Calu3 (cell line): ENCODE measurements at regions of chr15 and their contacts with region 1.

Region 1: DNA sequence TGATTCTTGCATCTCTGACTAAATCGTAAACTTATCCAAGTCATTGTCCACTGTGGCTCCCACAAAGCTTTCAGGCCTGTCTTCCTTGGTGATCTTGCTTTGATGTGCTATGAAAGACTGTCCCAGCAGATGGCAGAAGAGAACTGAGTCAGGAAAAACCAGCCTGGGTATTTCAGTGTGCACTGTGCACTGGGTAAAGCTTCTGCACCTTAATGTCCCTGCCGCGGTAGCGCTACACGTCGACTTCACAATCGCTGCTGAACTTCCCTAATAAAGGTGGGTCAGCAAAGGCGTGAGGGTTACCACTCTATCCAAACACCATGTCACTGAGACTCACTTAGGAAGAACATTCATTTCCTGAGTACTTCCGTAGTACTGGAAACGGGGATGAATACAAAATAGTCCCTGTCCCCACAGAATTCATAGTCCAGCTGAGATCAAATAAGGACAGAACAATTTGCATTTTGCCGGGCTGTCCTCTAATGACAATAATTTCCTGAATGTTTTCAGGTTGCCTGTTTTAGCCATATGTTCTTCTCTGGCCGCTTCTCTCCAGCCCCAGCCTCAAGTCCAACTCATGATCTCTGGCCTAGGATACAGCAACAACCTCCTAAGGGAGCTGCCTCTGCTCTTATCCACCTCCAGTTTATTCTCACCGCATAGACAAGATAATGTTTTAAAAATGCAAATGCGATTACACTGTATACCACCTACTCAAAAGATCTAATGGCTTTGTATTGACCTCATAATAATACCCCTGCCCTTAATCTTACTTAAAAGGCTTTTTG is 83.6 kb upstream of the AKAP13 start:
- DNase-seq: peak; percentile 80
- H3K4me3 Mint-ChIP-seq: peak overlapping the region; percentile 54
- H3K27ac Mint-ChIP-seq: no peak overlapping the region
- H3K4me1 Mint-ChIP-seq: peaks cover 20% of the 10 kb centered on the region
- H3K27me3 Mint-ChIP-seq: no peaks in the 10 kb centered on the region
- CTCF ChIP-seq: peak; percentile 68

Region 2: GRCh38 chr15:84981054-84981710 is 315.6 kb before region 1 on chr15:
- CTCF ChIA-PET with region 1: no interaction called
- intact Hi-C with region 1: no loop called
- DNase-seq: peak; percentile 99
- H3K4me3 Mint-ChIP-seq: peak overlapping the region; percentile 97
- H3K27ac Mint-ChIP-seq: peak overlapping the region; percentile 94
- H3K4me1 Mint-ChIP-seq: peaks cover 28% of the 10 kb centered on the region
- H3K27me3 Mint-ChIP-seq: no peaks in the 10 kb centered on the region
- CTCF ChIP-seq: peak; percentile 49

Region 3: GRCh38 chr15:85091990-85092389 is 204.8 kb before region 1 on chr15:
- CTCF ChIA-PET with region 1: no interaction called
- intact Hi-C with region 1: no loop called
- DNase-seq: no peak
- H3K4me3 Mint-ChIP-seq: no peak overlapping the region
- H3K27ac Mint-ChIP-seq: no peak overlapping the region
- H3K4me1 Mint-ChIP-seq: no peaks in the 10 kb centered on the region
- H3K27me3 Mint-ChIP-seq: no peaks in the 10 kb centered on the region
- CTCF ChIP-seq: no peak

Region 4: DNA sequence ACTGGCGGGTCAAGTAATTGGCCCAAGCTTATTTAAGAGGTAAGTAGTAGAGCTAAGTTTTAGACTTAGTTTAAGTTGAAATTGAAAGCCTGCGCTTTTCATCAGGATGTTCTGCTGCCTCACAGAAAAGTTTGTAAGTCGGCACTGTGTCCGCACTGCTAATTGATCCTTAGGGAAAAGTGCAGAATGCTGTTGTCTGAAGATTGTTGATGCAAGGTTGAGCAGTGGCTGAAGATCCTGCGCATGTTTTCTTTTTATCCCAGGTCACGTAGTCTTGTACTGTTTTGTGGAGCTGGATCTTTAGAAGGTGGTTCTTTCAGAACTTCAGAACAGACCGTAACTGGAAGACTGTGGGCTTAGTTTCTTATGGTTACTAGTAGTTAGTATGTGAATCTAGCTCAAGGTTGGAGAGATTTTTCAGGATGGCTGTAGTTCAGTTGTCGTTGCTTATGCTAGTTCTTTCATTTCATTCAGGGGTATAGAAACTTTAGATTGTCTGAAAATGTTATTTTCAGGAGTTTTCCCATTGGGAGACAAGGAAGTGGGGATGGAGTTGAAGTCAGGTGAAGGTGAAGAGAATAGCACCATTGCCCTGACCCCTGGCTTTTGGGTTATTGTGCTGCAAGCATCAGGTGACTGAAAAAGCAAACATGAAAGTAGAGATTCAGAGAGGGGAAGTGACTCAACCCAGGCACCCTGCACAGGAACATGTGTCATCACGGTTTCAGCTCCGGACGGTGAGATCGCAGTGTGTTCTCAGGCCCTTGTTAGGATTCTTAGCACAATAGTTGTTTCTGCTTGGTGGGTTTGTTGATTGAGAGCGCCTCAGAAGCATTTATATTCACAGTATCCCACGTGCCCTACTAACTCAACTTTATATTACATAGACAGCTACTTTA is 116.4 kb after region 1 on chr15:
- CTCF ChIA-PET with region 1: interaction called, 51 read pairs
- intact Hi-C with region 1: loop called (anchors 2 kb)
- DNase-seq: peak; percentile 79
- H3K4me3 Mint-ChIP-seq: peak overlapping the region; percentile 43
- H3K27ac Mint-ChIP-seq: peak overlapping the region; percentile 90
- H3K4me1 Mint-ChIP-seq: peaks cover 79% of the 10 kb centered on the region
- H3K27me3 Mint-ChIP-seq: no peaks in the 10 kb centered on the region
- CTCF ChIP-seq: no peak

Region 5: DNA sequence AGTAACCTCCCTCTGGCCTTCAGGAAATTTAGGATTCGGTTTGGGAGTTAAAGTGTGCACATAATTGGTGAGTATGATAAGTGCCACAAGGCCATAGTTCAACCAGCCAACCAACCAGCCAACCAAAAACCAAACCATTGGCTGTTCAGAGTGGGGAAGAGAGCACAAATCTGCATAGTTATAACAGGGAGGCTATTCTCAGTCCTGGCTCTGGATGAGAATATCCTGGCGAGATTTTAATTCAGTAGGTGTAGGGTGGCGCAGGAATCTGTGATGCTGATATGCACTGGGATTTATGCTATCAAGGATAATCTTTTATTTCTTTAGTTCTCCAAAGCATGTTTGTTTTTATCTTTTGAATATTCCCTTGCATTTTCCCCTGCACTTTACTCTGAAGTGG is 132.7 kb after region 1 on chr15:
- CTCF ChIA-PET with region 1: no interaction called
- intact Hi-C with region 1: no loop called
- DNase-seq: no peak
- H3K4me3 Mint-ChIP-seq: no peak overlapping the region
- H3K27ac Mint-ChIP-seq: no peak overlapping the region
- H3K4me1 Mint-ChIP-seq: peaks cover 33% of the 10 kb centered on the region
- H3K27me3 Mint-ChIP-seq: no peaks in the 10 kb centered on the region
- CTCF ChIP-seq: no peak

Region 6: DNA sequence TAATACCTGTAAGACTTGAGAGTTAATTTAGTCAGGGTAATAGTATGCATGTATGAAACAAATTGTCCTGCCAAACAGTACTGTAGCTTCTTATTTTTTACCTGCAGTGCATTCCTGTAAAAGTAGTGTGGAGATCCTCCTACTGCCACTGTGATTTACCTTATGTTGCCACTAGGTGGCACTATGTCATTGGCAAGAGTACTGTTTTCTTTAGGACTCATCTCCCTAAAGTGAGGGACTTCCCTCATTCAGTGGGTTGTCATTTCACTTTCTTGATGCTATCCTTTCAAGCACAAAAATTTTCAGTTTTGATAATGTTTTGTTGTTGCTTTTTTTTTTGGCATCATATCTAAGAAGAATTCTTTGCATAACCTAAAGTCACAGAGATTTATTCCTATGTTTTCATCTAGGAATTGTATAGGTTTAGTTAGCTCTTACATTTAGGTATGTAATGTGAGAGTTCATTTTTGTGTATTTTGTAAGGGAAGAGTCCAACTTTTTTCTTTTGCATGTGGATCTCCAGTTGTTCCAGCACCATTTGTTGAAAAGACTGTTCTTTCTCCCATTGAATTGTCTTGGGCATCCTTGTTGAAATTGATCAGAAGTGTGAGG is 189.3 kb after region 1 on chr15:
- CTCF ChIA-PET with region 1: interaction called, 5 read pairs
- intact Hi-C with region 1: loop called (anchors 5 kb)
- DNase-seq: peak; percentile 78
- H3K4me3 Mint-ChIP-seq: no peak overlapping the region
- H3K27ac Mint-ChIP-seq: no peak overlapping the region
- H3K4me1 Mint-ChIP-seq: peaks cover 53% of the 10 kb centered on the region
- H3K27me3 Mint-ChIP-seq: no peaks in the 10 kb centered on the region
- CTCF ChIP-seq: peak; percentile 77

Region 7: GRCh38 chr15:85618956-85619491 is 322.2 kb after region 1 on chr15:
- CTCF ChIA-PET with region 1: no interaction called
- intact Hi-C with region 1: loop called (anchors 10 kb)
- DNase-seq: peak; percentile 58
- H3K4me3 Mint-ChIP-seq: no peak overlapping the region
- H3K27ac Mint-ChIP-seq: no peak overlapping the region
- H3K4me1 Mint-ChIP-seq: peaks cover 38% of the 10 kb centered on the region
- H3K27me3 Mint-ChIP-seq: no peaks in the 10 kb centered on the region
- CTCF ChIP-seq: no peak

Region 8: DNA sequence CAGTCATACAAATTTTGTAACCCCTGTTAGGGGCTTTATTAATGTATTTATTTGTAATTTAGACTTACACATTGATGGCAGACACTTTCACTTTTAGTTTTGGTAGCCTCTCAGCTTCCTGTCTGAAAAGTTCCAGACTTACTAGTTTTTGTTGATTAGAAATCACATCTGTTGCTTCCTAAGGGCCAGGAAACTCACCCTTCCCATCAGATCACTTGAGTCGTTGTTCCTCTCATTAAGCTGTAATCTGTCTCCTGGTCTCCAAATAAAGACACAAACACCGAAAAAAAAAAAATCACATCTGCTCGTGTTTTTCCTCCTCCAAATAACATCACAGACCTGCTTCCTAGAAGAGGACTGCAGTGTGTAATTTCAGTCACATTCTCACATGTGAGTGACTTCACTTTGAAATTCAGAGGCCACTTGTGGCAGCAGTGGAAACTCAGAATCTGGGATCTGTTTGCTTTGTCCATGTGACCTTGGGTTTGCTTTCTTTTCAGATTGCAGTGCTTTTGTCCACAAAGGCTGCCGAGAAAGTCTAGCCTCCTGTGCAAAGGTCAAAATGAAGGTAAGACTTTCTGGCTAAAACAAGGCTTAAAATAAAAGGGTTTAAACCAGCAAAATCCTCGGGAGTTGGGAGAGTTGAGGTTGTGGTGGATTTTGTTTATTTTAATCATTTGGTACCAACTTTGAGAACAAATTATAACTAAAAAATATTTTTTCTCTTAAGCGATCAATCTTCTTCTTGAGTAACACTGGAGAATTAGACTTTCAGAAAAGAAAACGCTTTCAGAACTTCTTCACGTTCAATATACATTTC is 410.9 kb after region 1 on chr15:
- CTCF ChIA-PET with region 1: no interaction called
- intact Hi-C with region 1: loop called (anchors 10 kb)
- DNase-seq: no peak
- H3K4me3 Mint-ChIP-seq: peak overlapping the region; percentile 27
- H3K27ac Mint-ChIP-seq: peak overlapping the region; percentile 66
- H3K4me1 Mint-ChIP-seq: peaks cover 27% of the 10 kb centered on the region
- H3K27me3 Mint-ChIP-seq: no peaks in the 10 kb centered on the region
- CTCF ChIP-seq: no peak

Region 9: GRCh38 chr15:85840065-85840801 is 543.4 kb after region 1 on chr15:
- CTCF ChIA-PET with region 1: interaction called, 3 read pairs
- intact Hi-C with region 1: loop called (anchors 5 kb)
- DNase-seq: peak; percentile 98
- H3K4me3 Mint-ChIP-seq: peak overlapping the region; percentile 57
- H3K27ac Mint-ChIP-seq: no peak overlapping the region
- H3K4me1 Mint-ChIP-seq: peaks cover 31% of the 10 kb centered on the region
- H3K27me3 Mint-ChIP-seq: peaks cover 20% of the 10 kb centered on the region
- CTCF ChIP-seq: peak; percentile 88